ENCODE measurements at regions of chr22 and their contacts with region 1.

Region 1: GRCh38 chr22:21065230-21065854 is 19.6 kb downstream of the LRRC74B start:
- DNase-seq: no peak
- H3K4me3 ChIP-seq: no peak overlapping the region
- H3K27ac ChIP-seq: no peak overlapping the region
- H3K27me3 ChIP-seq: peaks cover 11% of the 10 kb centered on the region
- CTCF ChIP-seq: no peak

Region 2: GRCh38 chr22:20881231-20881630 is 184.1 kb before region 1 on chr22:
- CTCF ChIA-PET with region 1: no interaction called
- POLR2A ChIA-PET with region 1: no interaction called
- DNase-seq: no peak
- H3K4me3 ChIP-seq: no peak overlapping the region
- H3K27ac ChIP-seq: no peak overlapping the region
- H3K27me3 ChIP-seq: no peaks in the 10 kb centered on the region
- CTCF ChIP-seq: no peak

Region 3: DNA sequence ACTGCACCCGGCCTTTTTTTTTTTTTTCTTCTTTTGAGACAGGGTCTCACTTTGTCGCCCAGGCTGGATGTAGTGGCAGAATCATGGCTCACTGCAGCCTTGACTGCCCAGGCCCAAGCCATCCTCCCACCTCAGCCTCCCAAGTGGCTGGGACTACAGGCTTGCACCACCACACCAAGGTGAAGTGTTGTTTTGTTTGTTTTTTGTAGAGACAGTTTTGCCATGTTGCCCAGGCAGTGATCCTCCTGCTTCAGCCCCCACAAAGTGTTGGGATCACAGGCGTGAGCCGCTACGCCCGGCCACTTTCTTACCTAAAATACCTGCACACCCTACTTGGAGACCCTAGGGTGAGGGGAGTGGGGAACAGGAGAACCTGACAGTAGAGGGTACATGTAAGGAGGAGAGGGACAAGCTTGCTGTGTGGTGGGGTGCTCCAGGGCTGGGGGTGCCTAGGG is 102.8 kb before region 1 on chr22:
- CTCF ChIA-PET with region 1: interaction called, 10 read pairs
- POLR2A ChIA-PET with region 1: no interaction called
- DNase-seq: no peak
- H3K4me3 ChIP-seq: no peak overlapping the region
- H3K27ac ChIP-seq: no peak overlapping the region
- H3K27me3 ChIP-seq: peaks cover 21% of the 10 kb centered on the region
- CTCF ChIP-seq: no peak

Region 4: GRCh38 chr22:21031971-21032867 is 33.1 kb before region 1 on chr22 and contains the start of gene SLC7A4:
- CTCF ChIA-PET with region 1: no interaction called
- POLR2A ChIA-PET with region 1: no interaction called
- DNase-seq: no peak
- H3K4me3 ChIP-seq: peak within 1 kb of the TSS; percentile 25
- H3K27ac ChIP-seq: no peak within 1 kb of the TSS
- H3K27me3 ChIP-seq: peaks cover 23% of the 10 kb centered on the region
- CTCF ChIP-seq: no peak
- polyA plus RNA-seq, gene SLC7A4: 0.11 and 0.24 TPM in 2 replicates

Region 5: GRCh38 chr22:21051493-21052415 is 13.6 kb before region 1 on chr22:
- CTCF ChIA-PET with region 1: no interaction called
- POLR2A ChIA-PET with region 1: no interaction called
- DNase-seq: no peak
- H3K4me3 ChIP-seq: no peak overlapping the region
- H3K27ac ChIP-seq: no peak overlapping the region
- H3K27me3 ChIP-seq: peaks cover 9% of the 10 kb centered on the region
- CTCF ChIP-seq: no peak

Region 6: DNA sequence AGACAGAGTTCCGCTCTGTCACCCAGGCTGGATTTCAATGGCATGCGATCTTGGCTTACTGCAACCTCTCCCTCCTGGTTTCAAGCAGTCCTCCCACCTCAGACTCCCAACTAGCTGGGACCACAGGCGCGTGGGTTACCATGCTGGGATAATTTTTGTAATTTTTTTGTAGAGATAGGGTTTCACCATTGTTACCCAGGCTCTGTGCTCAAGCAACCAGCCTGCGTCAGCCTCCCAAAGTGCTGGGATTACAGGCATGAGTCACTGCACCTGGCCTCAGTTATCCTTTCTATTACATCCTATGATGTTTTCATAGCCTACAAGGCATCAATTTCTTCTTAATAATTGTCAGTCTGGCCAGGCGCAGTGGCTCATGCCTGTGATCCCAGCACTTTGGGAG is 16.9 kb after region 1 on chr22:
- CTCF ChIA-PET with region 1: no interaction called
- POLR2A ChIA-PET with region 1: no interaction called
- DNase-seq: no peak
- H3K4me3 ChIP-seq: no peak overlapping the region
- H3K27ac ChIP-seq: no peak overlapping the region
- H3K27me3 ChIP-seq: peaks cover 3% of the 10 kb centered on the region
- CTCF ChIP-seq: no peak

Region 7: DNA sequence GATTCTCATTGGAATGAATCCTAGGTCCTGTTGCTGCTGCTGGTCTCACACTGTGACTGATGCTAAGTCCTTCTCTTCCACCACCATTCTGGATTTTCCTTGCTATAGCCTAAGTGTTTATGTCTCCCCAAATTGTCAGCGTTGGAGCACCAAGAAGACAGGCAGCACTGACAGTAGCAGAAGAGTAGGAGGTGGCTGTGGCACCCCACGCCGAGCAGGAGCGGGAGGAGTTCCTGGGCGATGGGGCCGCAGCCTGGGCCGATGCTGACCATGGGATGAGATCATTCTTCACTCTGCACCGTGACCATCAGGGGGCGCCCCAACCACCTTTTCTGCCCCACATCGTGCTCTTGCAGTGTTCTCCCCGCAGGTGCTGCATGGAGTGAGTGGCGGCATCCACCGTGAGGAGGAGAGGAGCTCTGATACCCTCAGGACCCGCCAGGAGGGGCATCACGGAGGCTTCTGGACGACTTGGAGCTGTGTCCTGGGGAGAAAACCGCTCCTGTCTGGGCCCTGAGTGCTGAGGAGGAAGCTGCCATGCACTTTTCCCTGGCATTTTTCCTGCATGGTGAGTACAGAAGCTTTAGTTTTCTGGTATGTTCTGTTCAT is 37.4 kb after region 1 on chr22:
- CTCF ChIA-PET with region 1: interaction called, 10 read pairs
- POLR2A ChIA-PET with region 1: no interaction called
- DNase-seq: no peak
- H3K4me3 ChIP-seq: no peak overlapping the region
- H3K27ac ChIP-seq: no peak overlapping the region
- H3K27me3 ChIP-seq: peaks cover 2% of the 10 kb centered on the region
- CTCF ChIP-seq: peak; percentile 69